ENCODE measurements at regions of chr20 and their contacts with region 1.

Region 1: DNA sequence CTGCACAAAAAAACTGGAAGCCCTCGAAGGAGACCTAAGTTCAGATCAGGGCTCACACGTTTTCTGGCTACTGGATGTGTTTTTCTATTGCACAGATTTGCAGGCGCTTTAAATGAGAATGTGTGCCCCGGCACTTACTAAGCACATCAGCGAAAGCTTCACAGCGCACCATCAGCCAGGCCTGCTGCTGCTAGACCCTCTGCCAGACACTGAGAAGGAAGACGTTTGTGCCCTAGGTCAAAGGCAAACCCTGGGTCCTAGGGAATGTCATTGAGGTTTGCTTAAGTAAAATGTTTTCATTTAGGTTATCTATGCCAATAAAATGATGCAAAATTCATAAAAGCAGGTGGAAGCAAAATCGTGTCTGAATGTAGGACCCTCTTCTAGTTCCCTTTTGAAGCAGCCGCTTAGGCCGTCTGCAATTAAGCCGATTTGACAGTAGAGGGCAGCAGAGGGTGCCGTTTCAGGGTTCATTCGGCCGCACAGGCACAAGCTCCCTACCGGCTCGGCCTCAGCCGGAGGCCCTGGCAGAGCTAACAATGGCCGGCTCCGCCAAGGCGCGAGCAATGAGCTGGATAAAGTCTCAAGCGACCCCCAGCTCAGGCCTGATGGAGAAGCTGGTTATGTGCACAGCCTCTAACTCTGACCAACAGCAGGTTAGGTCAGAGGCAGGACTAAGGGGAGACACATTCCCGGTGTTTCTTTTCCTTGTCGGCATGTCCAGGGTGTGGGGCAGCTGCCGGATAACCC is 107.2 kb upstream of the FOXA2 start:
- DNase-seq: peak; percentile 83 to 93
- H3K4me3 ChIP-seq: peak overlapping the region in 3 of 4 donors; percentile 19 to 21 (median 20)
- H3K27ac ChIP-seq: peak overlapping the region in 2 of 5 donors; percentile 6 to 41
- H3K4me1 ChIP-seq: peaks cover 0 to 17% (median 9%) of the 10 kb centered on the region in 4 donors
- H3K27me3 ChIP-seq: no peaks in the 10 kb centered on the region
- CTCF ChIP-seq: peak in 5 of 7 experiments; percentile 79 to 91 (median 89)
- EP300 ChIP-seq: no peak
- POLR2A ChIP-seq: no peak

Region 2: GRCh38 chr20:23034721-23035671 is 343.5 kb after region 1 on chr20 and contains the start of gene SSTR4:
- intact Hi-C with region 1: loop called (anchors 10 kb)
- DNase-seq: peak in 1 of 2 donors; percentile 59
- H3K4me3 ChIP-seq: peak within 1 kb of the TSS; percentile 15 to 42 (median 25)
- H3K27ac ChIP-seq: no peak within 1 kb of the TSS
- H3K4me1 ChIP-seq: peaks cover 5 to 8% (median 8%) of the 10 kb centered on the region in 4 donors
- H3K27me3 ChIP-seq: peaks cover 0 to 41% (median 15%) of the 10 kb centered on the region in 3 donors
- CTCF ChIP-seq: no peak
- EP300 ChIP-seq: no peak
- POLR2A ChIP-seq: no peak
- total RNA-seq, gene SSTR4: not detected

Region 3: DNA sequence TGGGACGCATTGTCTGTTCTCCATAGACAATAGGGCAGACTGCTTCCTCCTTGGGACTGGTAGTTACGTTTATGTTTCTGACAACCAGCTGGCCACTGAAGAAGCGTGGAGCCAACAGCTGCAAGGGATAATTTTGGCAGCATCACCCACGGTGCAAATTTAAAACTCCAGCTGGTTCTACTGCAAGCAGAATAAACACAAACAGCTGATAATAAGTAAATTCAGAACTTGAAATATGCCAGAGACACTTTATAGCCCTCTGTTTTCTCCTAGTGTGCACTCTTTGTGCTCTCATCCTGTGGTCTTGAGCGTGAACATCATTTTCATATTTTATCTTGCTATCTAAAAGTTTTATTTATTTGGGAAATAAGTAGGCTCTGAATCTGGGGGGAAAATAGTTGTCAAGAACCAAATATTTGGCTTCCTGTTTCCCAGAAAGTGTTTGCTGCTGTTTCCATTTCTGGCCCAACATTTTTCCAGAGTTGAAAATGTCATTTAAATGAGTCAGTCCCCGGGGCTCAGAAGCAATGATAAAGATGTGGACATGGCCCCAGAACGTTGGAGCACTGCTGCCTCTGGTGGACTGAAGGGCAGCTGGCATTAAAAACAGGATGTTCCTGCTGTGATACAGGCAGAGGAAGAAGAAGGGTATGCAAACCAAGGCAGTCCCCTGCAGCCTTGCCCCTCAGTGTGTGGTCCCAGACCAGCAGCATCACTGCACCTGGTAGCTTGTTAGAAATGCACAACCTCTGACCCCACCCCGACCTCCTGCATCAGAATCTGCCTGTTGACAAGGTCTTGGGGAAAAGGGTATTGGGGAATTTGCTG is 370.4 kb after region 1 on chr20:
- intact Hi-C with region 1: loop called (anchors 10 kb)
- DNase-seq: peak in 1 of 2 donors; percentile 84
- H3K4me3 ChIP-seq: no peak overlapping the region
- H3K27ac ChIP-seq: peak overlapping the region in 4 of 5 donors; percentile 41 to 76 (median 61)
- H3K4me1 ChIP-seq: peaks cover 14 to 31% (median 22%) of the 10 kb centered on the region in 4 donors
- H3K27me3 ChIP-seq: no peaks in the 10 kb centered on the region
- CTCF ChIP-seq: peak in 3 of 7 experiments; percentile 13 to 43 (median 41)
- EP300 ChIP-seq: no peak
- POLR2A ChIP-seq: no peak